IMR-90 (cell line): ENCODE measurements at regions of chr18 and their contacts with region 1.

Region 1: DNA sequence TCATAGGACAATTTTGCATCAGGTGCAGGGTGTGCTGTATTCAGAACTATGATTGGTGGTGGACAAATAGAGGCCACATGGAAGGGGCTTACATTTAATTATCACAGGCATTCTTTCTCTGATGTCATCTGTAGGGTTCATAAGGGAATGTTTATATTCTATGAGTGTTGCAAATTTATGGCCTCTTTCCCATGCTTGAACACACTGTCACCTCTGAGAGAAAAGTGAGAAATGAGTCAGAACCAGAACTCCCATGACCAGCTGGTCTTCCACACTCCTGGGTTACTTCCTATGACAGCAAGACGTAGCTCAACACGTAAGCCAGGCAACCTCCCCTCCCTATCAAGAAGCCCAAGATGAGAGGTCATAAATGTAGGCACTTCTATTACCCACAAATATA is 310.8 kb downstream of the PIEZO2 start:
- DNase-seq: peak; percentile 87
- ATAC-seq: peak; percentile 48
- H3K4me3 ChIP-seq: no peak overlapping the region
- H3K27ac ChIP-seq: no peak overlapping the region
- H3K4me1 ChIP-seq: peaks cover 7% of the 10 kb centered on the region
- H3K27me3 ChIP-seq: no peaks in the 10 kb centered on the region
- CTCF ChIP-seq: no peak
- POLR2A ChIP-seq: no peak
- RAD21 ChIP-seq: no peak

Region 2: GRCh38 chr18:10822456-10822855 is 16.1 kb before region 1 on chr18:
- CTCF ChIA-PET with region 1: no interaction called
- POLR2A ChIA-PET with region 1: interaction called, 18 read pairs
- dilution Hi-C with region 1: no loop called
- in situ Hi-C with region 1: no loop called
- intact Hi-C with region 1: no loop called
- DNase-seq: no peak
- ATAC-seq: no peak
- H3K4me3 ChIP-seq: no peak overlapping the region
- H3K27ac ChIP-seq: no peak overlapping the region
- H3K4me1 ChIP-seq: no peaks in the 10 kb centered on the region
- H3K27me3 ChIP-seq: no peaks in the 10 kb centered on the region; the same call in 1 of the 2 replicates
- CTCF ChIP-seq: no peak
- POLR2A ChIP-seq: no peak
- RAD21 ChIP-seq: no peak